ENCODE measurements at regions of chrX and their contacts with region 1.

Region 1: GRCh38 chrX:13717700-13718472 is 16.5 kb downstream of the TRAPPC2 start:
- DNase-seq: no peak
- CTCF ChIP-seq: no peak

Region 2: DNA sequence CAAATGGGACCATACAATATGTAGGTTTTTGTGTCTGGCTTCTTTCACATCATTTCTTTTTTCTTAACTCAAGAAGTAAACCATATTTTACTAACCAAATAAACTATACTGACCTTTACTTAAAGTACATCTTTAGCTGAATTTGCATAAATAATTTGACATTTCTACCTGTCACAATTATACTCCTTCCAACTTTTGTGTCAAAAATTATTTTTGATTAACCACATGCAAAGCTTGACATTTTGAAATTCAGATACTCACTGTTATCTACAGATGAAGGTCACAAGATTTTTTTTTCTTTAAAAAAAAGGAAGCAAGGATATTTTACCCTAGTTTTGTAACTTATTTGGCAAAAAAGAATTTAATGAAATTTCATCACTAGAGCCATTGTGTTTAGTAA is 41.0 kb before region 1 on chrX:
- CTCF ChIA-PET with region 1: no interaction called
- POLR2A ChIA-PET with region 1: interaction called, 12 read pairs
- DNase-seq: no peak
- CTCF ChIP-seq: no peak

Region 3: GRCh38 chrX:13699183-13699826 is 18.6 kb before region 1 on chrX:
- CTCF ChIA-PET with region 1: no interaction called
- POLR2A ChIA-PET with region 1: no interaction called
- DNase-seq: peak; percentile 48
- CTCF ChIP-seq: no peak

Region 4: GRCh38 chrX:14300376-14300775 is 582.5 kb after region 1 on chrX:
- CTCF ChIA-PET with region 1: no interaction called
- POLR2A ChIA-PET with region 1: no interaction called
- DNase-seq: no peak
- CTCF ChIP-seq: no peak